ENCODE measurements at regions of chr3 and their contacts with region 1.

Region 1: GRCh38 chr3:108818404-108818803 is 4.2 kb upstream of the TRAT1 start:
- DNase-seq: peak; percentile 78
- H3K4me3 Mint-ChIP-seq: peak overlapping the region; percentile 6
- H3K27ac Mint-ChIP-seq: peak overlapping the region; percentile 16
- H3K4me1 Mint-ChIP-seq: peaks cover 34% of the 10 kb centered on the region
- H3K27me3 Mint-ChIP-seq: no peaks in the 10 kb centered on the region

Region 2: DNA sequence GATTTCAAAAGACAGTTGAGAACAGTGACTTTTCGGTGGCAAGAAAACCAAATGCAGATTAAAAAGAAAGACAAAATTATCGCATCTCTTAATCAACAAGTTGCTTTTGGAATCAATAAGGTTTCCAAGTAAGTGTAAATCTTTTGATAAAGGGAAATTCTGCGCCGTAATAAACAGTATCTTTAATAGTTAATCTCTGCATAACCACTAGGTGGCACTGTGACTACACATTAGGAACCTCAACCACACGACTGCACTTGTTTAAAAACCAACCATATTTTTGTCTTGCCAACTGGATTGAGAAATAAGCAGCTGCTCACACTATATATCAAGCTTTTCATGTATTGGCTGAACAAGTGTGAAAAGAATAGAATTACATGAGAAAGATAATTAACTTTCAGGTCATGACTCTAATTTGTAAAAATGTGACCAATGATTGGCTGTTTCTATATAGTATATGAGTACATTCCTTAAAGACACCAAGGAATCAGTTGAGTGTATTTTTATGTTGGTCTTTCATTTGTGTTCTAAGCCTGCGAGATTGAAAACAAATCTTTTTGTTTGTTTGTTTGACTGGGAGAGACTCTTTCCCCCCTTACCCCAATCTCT is 156.2 kb before region 1 on chr3:
- CTCF ChIA-PET with region 1: interaction called, 26 read pairs
- DNase-seq: peak; percentile 63
- H3K4me3 Mint-ChIP-seq: no peak overlapping the region
- H3K27ac Mint-ChIP-seq: no peak overlapping the region
- H3K4me1 Mint-ChIP-seq: peaks cover 18% of the 10 kb centered on the region
- H3K27me3 Mint-ChIP-seq: no peaks in the 10 kb centered on the region

Region 3: DNA sequence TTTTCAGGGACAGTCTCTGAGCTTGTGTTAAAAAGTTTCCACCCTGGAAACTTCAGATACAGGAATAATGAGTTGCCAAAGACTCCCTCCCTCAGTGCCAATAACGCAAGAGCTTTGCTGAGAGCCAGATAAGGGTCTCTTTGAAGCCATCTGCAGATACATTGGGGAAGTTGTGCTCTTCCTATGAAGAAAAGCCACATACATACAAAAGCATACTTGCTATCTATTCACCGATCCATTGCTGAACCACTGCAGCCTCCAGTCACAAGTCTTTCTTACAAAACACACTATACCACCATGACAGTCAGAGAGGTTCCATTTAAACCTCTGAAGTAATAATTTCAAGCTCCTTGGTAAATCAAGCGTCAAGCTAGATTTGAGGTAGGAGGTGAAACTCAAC is 51.2 kb before region 1 on chr3:
- CTCF ChIA-PET with region 1: no interaction called
- DNase-seq: no peak
- H3K4me3 Mint-ChIP-seq: no peak overlapping the region
- H3K27ac Mint-ChIP-seq: no peak overlapping the region
- H3K4me1 Mint-ChIP-seq: no peaks in the 10 kb centered on the region
- H3K27me3 Mint-ChIP-seq: peaks cover 8% of the 10 kb centered on the region

Region 4: DNA sequence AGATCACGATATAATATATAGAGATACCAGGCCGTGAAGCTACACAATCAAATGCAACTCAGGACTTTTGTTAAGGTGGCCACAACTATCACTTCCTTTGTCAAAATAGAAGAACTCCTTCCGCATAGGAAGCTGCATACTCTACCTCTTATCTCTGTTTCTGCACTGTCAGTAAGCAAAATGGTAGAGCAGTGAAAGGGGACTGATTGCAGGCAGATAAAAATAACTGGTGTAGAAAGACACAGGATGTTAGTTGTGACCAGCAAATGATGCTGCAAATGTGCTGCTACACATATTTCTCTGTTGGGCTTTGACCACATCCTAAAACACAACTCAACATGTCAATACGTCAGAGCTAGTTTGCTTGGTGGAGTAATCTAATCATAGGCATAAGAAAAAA is 12.1 kb before region 1 on chr3:
- CTCF ChIA-PET with region 1: interaction called, 15 read pairs
- DNase-seq: peak; percentile 52
- H3K4me3 Mint-ChIP-seq: no peak overlapping the region
- H3K27ac Mint-ChIP-seq: peak overlapping the region; percentile 89
- H3K4me1 Mint-ChIP-seq: peaks cover 32% of the 10 kb centered on the region
- H3K27me3 Mint-ChIP-seq: no peaks in the 10 kb centered on the region

Region 5: GRCh38 chr3:108835101-108835500 is 16.7 kb after region 1 on chr3:
- CTCF ChIA-PET with region 1: interaction called, 13 read pairs
- DNase-seq: peak; percentile 40
- H3K4me3 Mint-ChIP-seq: peak overlapping the region; percentile 74
- H3K27ac Mint-ChIP-seq: peak overlapping the region; percentile 95
- H3K4me1 Mint-ChIP-seq: peaks cover 83% of the 10 kb centered on the region
- H3K27me3 Mint-ChIP-seq: no peaks in the 10 kb centered on the region